Gastrocnemius medialis (tissue), 4 donors: ENCODE measurements at regions of chr3 and their contacts with region 1.

Region 1: DNA sequence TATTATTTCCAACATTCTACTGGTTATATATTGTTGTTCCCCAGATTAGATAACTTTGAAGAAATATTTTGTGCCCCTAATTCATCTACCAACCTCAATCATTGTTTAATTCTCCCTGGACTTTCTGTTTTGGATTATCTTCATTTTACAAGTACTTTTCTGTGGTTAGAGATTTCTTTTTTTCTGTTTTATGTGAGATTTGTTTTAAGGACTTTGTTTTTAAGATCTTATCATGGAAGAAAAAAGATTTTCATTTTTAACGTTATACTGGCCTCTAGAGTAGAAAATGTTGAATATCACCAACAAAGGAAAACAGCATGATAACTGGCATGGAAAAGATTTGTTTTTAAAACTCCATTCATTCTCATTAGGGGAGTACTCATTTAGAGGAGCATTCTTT is 210.9 kb upstream of the KCNMB2 start:
- DNase-seq: no peak
- ATAC-seq: no peak
- H3K4me3 ChIP-seq: no peak overlapping the region
- H3K27ac ChIP-seq: no peak overlapping the region
- H3K4me1 ChIP-seq: peaks cover 8 to 11% of the 10 kb centered on the region in 2 donors
- H3K27me3 ChIP-seq: no peaks in the 10 kb centered on the region
- CTCF ChIP-seq: peak in 4 of 5 experiments; percentile 16 to 30 (median 22)
- POLR2A ChIP-seq: no peak

Region 2: DNA sequence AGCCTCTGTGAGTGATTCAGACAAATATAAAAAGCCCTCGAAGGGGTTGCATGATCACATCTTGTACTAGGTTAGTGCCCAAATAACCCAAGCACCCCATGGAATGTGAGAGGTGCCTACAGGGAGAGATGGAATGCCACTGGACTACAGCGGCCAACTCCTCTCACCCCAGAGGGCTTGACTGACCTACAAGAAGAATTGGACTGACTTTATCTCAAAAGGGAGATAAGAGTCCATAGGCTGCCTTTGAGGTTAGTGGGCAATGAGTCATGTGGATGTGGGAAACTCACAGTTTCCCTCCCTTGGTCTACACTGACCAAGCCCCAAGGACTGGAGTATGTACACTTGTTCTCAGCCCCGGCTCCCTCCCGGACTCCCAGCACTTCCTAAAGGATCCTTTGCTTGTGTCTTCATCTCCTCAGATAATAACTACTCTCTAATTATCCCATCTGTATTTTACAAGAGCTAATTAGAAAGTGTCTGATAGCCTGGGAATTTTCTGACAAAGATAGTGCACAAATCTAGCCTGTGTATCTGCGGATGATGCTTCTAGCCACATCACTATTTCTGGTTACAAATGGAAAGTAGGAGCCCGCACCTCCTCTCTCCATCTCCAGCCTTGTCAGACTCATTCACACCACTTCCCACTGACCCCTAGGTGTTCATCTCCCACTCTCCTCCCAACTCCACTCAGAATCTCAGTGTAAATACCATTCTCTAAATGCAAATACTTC is 580.3 kb before region 1 on chr3:
- in situ Hi-C with region 1: no loop called
- intact Hi-C with region 1: loop called (anchors 10 kb)
- DNase-seq: no peak
- ATAC-seq: peak in 1 of 2 donors; percentile 45
- H3K4me3 ChIP-seq: no peak overlapping the region
- H3K27ac ChIP-seq: no peak overlapping the region
- H3K4me1 ChIP-seq: peaks cover 15 to 20% of the 10 kb centered on the region in 2 donors
- H3K27me3 ChIP-seq: no peaks in the 10 kb centered on the region
- CTCF ChIP-seq: no peak
- POLR2A ChIP-seq: no peak

Region 3: GRCh38 chr3:177835008-177835407 is 490.3 kb before region 1 on chr3:
- in situ Hi-C with region 1: no loop called
- intact Hi-C with region 1: loop called (anchors 10 kb)
- DNase-seq: no peak
- ATAC-seq: no peak
- H3K4me3 ChIP-seq: no peak overlapping the region
- H3K27ac ChIP-seq: no peak overlapping the region
- H3K4me1 ChIP-seq: peaks cover 3 to 11% of the 10 kb centered on the region in 2 donors
- H3K27me3 ChIP-seq: no peaks in the 10 kb centered on the region
- CTCF ChIP-seq: no peak
- POLR2A ChIP-seq: no peak

Region 4: DNA sequence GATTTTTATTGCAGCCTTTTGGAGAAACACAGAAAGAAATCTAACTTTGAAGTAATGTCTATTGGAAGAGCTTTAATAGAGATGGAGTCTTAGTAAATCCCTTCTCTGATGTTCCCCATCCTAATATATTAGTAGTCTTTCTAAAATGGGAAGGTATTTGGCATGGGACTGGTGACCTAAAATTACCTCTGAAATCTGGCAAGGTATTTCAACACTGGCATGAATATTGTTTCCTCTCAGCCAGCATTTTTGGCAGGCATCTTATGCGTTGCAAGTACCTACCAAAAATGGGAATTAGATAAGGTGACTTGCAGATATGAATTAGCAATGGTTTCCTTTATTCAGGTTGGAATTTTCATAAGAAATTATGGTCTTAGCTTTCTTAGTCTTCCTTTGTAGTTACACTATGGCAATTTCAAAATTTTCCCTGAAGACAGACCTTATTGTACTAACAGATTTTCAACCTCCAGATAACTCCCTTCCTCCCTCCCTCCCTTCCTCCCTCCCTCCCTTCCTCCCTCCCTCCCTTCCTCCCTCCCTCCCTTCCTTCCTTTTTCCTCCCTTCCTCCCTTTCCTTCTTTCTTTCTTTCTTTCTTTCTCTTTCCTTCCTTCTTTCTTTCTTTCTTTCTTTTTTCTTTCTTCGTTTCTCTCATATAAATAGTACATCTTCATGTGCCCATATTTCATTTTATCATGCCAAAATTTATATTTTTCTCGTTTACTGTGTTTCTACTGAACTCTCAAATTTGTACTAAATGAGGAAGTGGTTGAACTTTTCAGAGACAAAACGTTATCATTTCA is 42.7 kb after region 1 on chr3:
- in situ Hi-C with region 1: no loop called
- intact Hi-C with region 1: loop called (anchors 5 kb)
- DNase-seq: peak in 1 of 2 donors; percentile 4
- ATAC-seq: peak; percentile 93 to 100
- H3K4me3 ChIP-seq: no peak overlapping the region
- H3K27ac ChIP-seq: no peak overlapping the region
- H3K4me1 ChIP-seq: peaks cover 12 to 13% of the 10 kb centered on the region in 2 donors
- H3K27me3 ChIP-seq: no peaks in the 10 kb centered on the region
- CTCF ChIP-seq: no peak
- POLR2A ChIP-seq: no peak

Region 5: DNA sequence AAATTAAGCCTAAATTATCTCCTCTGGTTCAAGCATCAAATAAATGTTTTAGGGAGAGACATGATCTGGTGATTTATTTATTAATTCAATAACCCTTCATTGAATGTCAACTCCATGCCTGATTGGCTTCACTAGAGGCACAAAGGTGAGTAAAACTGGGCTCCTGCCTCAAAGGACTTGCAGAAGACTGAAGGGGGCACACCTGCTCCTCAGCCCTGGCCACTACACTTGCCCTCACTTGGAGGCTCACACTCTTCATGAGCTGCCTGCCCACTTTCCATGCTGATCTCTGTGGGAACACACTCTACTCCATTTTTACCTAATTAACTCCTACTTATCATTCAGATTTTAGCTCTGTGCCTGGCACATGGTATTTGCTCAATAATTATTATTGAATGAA is 126.5 kb after region 1 on chr3:
- in situ Hi-C with region 1: no loop called
- intact Hi-C with region 1: no loop called
- DNase-seq: no peak
- ATAC-seq: no peak
- H3K4me3 ChIP-seq: no peak overlapping the region
- H3K27ac ChIP-seq: no peak overlapping the region
- H3K4me1 ChIP-seq: peaks cover 9 to 18% of the 10 kb centered on the region in 2 donors
- H3K27me3 ChIP-seq: no peaks in the 10 kb centered on the region
- CTCF ChIP-seq: no peak
- POLR2A ChIP-seq: no peak

Region 6: GRCh38 chr3:178754852-178755510 is 429.7 kb after region 1 on chr3:
- in situ Hi-C with region 1: no loop called
- intact Hi-C with region 1: no loop called
- DNase-seq: no peak
- ATAC-seq: no peak
- H3K4me3 ChIP-seq: no peak overlapping the region
- H3K27ac ChIP-seq: no peak overlapping the region
- H3K4me1 ChIP-seq: no peaks in the 10 kb centered on the region
- H3K27me3 ChIP-seq: no peaks in the 10 kb centered on the region
- CTCF ChIP-seq: no peak
- POLR2A ChIP-seq: no peak